ENCODE measurements at regions of chr12 and their contacts with region 1.

Region 1: DNA sequence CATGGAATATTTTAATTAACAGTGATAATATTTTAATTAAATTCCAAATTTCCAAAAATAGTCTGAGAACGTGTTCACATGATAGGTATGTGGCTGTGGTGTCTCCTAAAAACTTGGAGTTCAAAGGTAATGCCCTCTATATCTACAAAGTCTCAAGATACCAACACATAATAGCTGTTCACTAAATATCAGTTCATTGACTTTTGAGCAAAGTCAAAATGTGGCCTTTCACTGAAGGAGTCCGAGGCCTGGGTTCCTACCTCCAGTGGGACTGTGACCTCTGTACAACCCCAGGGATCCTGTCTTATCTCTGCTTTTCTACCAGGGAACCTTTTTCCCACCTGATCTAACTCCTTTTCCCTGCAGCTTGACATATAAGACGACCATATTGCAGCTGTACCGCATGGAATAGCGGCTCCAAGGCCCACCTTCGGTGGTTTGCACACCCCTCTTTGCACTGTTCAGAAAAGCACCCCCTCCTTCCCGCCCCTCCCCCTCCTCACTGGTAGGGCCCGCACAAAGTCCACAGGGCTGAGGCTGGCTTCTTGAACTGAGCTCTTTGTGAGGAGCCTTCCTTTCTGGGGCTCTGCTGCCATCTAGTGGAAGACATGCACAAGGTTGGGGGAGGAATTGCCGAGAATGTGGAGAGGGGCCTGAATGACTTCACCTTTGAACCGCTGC is 3.1 kb downstream of the CCND2 start:
- DNase-seq: peak; percentile 95
- H3K4me3 Mint-ChIP-seq: peak overlapping the region; percentile 99
- H3K27ac Mint-ChIP-seq: peak overlapping the region; percentile 99
- H3K4me1 Mint-ChIP-seq: peaks cover 55% of the 10 kb centered on the region
- H3K27me3 Mint-ChIP-seq: no peaks in the 10 kb centered on the region

Region 2: GRCh38 chr12:3885277-3886094 is 391.2 kb before region 1 on chr12:
- CTCF ChIA-PET with region 1: interaction called, 36 read pairs
- intact Hi-C with region 1: loop called (anchors 1 kb)
- DNase-seq: peak; percentile 58
- H3K4me3 Mint-ChIP-seq: no peak overlapping the region
- H3K27ac Mint-ChIP-seq: peak overlapping the region; percentile 19
- H3K4me1 Mint-ChIP-seq: peaks cover 7% of the 10 kb centered on the region
- H3K27me3 Mint-ChIP-seq: no peaks in the 10 kb centered on the region

Region 3: GRCh38 chr12:4030929-4031702 is 245.5 kb before region 1 on chr12:
- CTCF ChIA-PET with region 1: interaction called, 15 read pairs
- intact Hi-C with region 1: loop called (anchors 2 kb)
- DNase-seq: peak; percentile 74
- H3K4me3 Mint-ChIP-seq: peak overlapping the region; percentile 62
- H3K27ac Mint-ChIP-seq: peak overlapping the region; percentile 27
- H3K4me1 Mint-ChIP-seq: peaks cover 34% of the 10 kb centered on the region
- H3K27me3 Mint-ChIP-seq: no peaks in the 10 kb centered on the region

Region 4: DNA sequence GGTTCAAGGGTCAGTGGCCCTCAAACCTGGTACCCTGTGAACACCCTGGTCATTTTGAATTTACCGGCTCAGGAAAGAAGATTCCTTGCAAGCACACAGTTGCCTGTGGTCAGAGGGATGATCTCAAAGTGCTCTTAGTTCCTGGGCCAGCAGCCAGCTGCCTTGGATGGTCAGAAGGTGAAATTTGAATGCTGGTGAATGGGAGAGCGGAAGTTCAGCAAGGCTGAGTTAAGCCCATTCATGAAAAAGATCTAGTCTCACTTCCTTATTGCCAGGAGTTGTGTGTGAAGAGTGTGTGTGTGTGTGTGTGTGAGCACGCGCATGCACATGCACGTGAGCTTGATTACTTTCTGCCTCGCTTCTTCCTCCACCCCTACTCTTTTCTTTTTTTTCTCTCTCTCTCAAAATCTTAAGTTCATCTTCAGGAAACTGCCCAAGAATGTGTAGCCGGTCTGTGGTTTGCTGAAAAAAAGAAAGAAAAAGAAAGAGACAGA is 158.6 kb before region 1 on chr12:
- CTCF ChIA-PET with region 1: interaction called, 3 read pairs
- intact Hi-C with region 1: loop called (anchors 1 kb)
- DNase-seq: no peak
- H3K4me3 Mint-ChIP-seq: peak overlapping the region; percentile 58
- H3K27ac Mint-ChIP-seq: peak overlapping the region; percentile 96
- H3K4me1 Mint-ChIP-seq: peaks cover 61% of the 10 kb centered on the region
- H3K27me3 Mint-ChIP-seq: no peaks in the 10 kb centered on the region

Region 5: DNA sequence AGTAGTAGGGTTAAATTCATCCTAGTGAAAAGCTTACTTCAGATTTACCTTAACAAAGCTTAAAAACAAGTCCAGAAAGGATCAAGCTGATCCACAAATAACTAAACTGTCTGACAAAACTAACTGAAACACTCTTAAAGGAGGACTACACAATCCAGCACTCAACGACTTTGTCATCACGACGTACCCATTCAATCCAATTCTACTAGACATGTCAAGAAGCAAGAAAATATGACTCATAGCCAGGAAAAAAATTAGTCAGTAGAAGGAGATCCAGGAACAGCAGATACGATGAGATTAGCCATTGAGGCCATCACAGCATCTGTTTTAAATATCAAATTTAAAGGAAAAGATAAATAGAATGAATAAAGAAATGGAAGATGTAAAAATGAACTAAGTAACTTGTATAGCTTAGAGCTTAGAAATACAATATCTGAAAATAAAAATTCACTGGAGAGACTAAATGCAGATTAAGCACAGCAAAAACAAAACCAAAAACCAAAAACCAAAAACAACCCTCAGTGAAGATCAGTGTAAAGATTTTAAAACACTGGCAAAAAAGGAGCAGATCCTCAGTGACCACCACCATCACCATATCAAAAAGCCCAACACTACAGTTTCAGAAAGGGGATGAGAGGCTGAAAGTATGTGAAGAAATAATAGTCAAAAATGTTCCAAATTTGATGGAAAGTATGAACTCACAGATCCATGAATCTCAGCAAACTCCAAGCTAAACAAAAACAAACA is 98.1 kb before region 1 on chr12:
- CTCF ChIA-PET with region 1: no interaction called
- intact Hi-C with region 1: loop called (anchors 1 kb)
- DNase-seq: peak; percentile 64
- H3K4me3 Mint-ChIP-seq: peak overlapping the region; percentile 14
- H3K27ac Mint-ChIP-seq: peak overlapping the region; percentile 87
- H3K4me1 Mint-ChIP-seq: peaks cover 21% of the 10 kb centered on the region
- H3K27me3 Mint-ChIP-seq: no peaks in the 10 kb centered on the region

Region 6: DNA sequence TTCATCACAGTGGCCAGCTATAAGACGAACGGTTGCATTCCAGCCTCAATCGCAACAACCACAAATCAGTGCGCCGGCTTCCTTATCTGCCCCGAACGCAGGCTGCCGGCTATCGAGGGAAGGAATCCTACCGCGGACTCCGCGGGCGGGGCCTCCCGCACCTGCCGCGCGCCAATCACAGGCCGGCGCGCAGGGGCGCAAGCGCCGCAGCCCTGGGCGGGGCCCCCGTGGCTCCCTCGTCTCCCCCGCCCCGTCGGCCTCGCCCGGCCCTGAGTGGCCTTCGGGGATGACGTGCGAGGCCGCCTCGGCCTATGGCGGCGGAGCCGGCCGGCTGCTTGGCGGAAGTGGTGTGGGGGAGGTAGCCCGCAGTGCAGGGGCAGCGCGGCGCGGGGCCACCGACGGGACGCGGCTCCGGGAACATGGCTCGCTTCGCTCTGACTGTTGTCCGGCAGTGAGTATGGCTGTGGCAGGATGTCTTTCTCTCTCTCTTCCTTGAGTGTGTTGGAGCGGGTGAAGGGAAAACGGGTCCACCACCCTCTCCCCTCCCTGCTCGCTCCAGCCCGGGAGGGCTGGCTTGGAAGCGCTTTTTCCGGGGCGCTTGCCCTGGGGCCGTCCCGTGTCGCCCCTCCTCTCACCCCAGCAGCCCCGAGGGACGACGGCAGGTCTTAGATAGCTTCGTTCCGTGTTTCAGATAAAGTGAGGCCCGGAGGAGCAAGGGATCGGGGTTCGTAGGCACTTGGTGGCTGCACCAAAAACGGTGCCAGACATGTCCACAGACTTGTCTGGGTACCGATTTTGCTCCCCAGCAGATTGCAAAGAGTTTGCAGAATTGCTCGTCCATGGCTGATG is 44.4 kb after region 1 on chr12 and contains the start of gene TIGAR:
- CTCF ChIA-PET with region 1: interaction called, 3 read pairs
- intact Hi-C with region 1: loop called (anchors 1 kb)
- DNase-seq: peak; percentile 91
- H3K4me3 Mint-ChIP-seq: peak within 1 kb of the TSS; percentile 83
- H3K27ac Mint-ChIP-seq: peak within 1 kb of the TSS; percentile 87
- H3K4me1 Mint-ChIP-seq: peaks cover 34% of the 10 kb centered on the region
- H3K27me3 Mint-ChIP-seq: no peaks in the 10 kb centered on the region
- total RNA-seq, gene TIGAR: 10.3 to 12.8 TPM

Region 7: GRCh38 chr12:5184186-5184585 is 907.5 kb after region 1 on chr12:
- CTCF ChIA-PET with region 1: no interaction called
- intact Hi-C with region 1: no loop called
- DNase-seq: no peak
- H3K4me3 Mint-ChIP-seq: no peak overlapping the region
- H3K27ac Mint-ChIP-seq: no peak overlapping the region
- H3K4me1 Mint-ChIP-seq: no peaks in the 10 kb centered on the region
- H3K27me3 Mint-ChIP-seq: peaks cover 6% of the 10 kb centered on the region